Dorsolateral prefrontal cortex (tissue), 120 donors: ENCODE measurements at regions of chr10 and their contacts with region 1.

Region 1: DNA sequence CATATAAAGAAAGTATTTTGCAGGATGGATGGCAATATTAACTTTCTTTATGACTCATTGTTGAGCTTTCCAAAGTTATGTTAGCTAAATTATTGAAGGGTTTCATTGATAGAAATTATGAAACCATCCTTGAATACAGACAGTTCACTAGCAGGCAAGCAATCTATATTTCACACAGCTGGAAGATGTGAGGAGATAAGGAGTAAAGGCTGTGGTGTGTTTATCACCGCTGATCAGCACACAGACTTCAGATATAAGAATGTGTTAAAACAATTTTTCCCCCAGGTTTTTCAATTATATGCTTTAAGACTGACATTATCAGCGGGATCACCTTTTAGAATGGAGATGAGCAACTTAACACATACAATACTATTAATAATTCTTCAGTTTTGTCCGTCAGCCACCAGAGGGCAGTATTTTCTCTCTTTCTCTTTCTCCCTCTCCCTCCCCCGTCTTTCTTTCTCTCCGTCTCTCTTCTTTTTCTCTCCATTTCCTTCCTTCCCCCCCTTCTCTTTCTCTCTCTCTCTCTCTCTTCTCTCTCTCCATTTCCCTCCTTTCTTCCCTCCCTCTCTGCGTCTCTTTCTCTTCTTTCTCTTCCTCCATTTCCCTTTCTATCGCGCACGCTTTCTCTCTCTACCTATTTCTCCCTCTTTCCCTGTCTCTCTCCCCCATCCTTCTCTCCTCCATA is 62.9 kb upstream of the FAM171A1 start:
- DNase-seq: peak in 1 of 10 donors; percentile 66
- H3K4me3 ChIP-seq: peak overlapping the region in 51 of 59 donors; percentile 3 to 60 (median 43)
- H3K27ac ChIP-seq: no peak overlapping the region
- H3K27me3 ChIP-seq: peaks cover 0 to 6% (median 0%) of the 10 kb centered on the region in 45 donors
- CTCF ChIP-seq: peak; percentile 74 to 97 (median 84)

Region 2: GRCh38 chr10:15374156-15374555 is 59.8 kb before region 1 on chr10:
- intact Hi-C with region 1: no loop called
- DNase-seq: no peak
- H3K4me3 ChIP-seq: no peak overlapping the region
- H3K27ac ChIP-seq: peak overlapping the region in 2 of 59 donors; percentile 4 to 8
- H3K27me3 ChIP-seq: no peaks in the 10 kb centered on the region
- CTCF ChIP-seq: no peak

Region 3: GRCh38 chr10:15719899-15720634 is 286.1 kb after region 1 on chr10 and contains the start of gene ITGA8:
- intact Hi-C with region 1: loop called (anchors 2 to 5 kb)
- DNase-seq: no peak
- H3K4me3 ChIP-seq: peak within 1 kb of the TSS in 58 of 59 donors; percentile 1 to 65 (median 51)
- H3K27ac ChIP-seq: peak within 1 kb of the TSS in 27 of 59 donors; percentile 2 to 83 (median 45)
- H3K27me3 ChIP-seq: peaks cover 0 to 47% (median 25%) of the 10 kb centered on the region in 45 donors
- CTCF ChIP-seq: peak in 30 of 56 donors; percentile 7 to 44 (median 22)
- total RNA-seq, gene ITGA8: 3.1 to 17.0 (median 7.8) TPM

Region 4: GRCh38 chr10:15725603-15726002 is 291.6 kb after region 1 on chr10:
- intact Hi-C with region 1: loop called (anchors 2 to 5 kb)
- DNase-seq: peak in 1 of 10 donors; percentile 12
- H3K4me3 ChIP-seq: no peak overlapping the region
- H3K27ac ChIP-seq: no peak overlapping the region
- H3K27me3 ChIP-seq: peaks cover 0 to 6% (median 0%) of the 10 kb centered on the region in 45 donors
- CTCF ChIP-seq: peak in 55 of 56 donors; percentile 28 to 79 (median 61)

Region 5: DNA sequence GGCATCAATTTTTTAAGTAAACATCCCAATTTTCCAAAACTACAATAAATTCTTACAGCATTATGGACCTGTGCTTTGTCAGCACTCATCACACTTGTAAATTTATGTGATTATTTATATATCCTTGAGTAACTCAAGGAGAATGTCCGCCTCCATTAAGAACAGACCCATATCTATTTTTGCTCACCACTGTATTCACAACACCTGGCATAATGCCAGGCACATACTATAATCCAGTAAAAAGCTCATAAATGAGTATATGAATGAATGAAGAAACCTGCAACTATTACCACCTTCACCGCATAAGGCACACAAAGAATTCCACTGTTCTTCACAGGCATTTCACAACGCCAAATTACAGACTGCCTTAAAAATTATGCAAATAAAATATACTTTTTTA is 379.4 kb after region 1 on chr10:
- intact Hi-C with region 1: no loop called
- DNase-seq: no peak
- H3K4me3 ChIP-seq: no peak overlapping the region
- H3K27ac ChIP-seq: no peak overlapping the region
- H3K27me3 ChIP-seq: no peaks in the 10 kb centered on the region
- CTCF ChIP-seq: no peak